SK-N-SH (cell line): ENCODE measurements at regions of chr18 and their contacts with region 1.

Region 1: GRCh38 chr18:76982841-76983587 is 149.6 kb downstream of the MBP start:
- DNase-seq: peak; percentile 90
- H3K4me3 ChIP-seq: peak overlapping the region in 1 of 2 experiments; percentile 45; a peak in 2 of 4 replicates
- H3K27ac ChIP-seq: no peak overlapping the region
- H3K4me1 ChIP-seq: peaks cover 0 to 11% of the 10 kb centered on the region in 2 experiments; a peak in 1 of 4 replicates
- H3K27me3 ChIP-seq: no peaks in the 10 kb centered on the region
- CTCF ChIP-seq: peak; percentile 93
- EP300 ChIP-seq: no peak
- RAD21 ChIP-seq: peak; percentile 76

Region 2: GRCh38 chr18:76803814-76804213 is 179.2 kb before region 1 on chr18:
- CTCF ChIA-PET with region 1: interaction called, 50 read pairs
- POLR2A ChIA-PET with region 1: no interaction called
- DNase-seq: peak; percentile 77
- H3K4me3 ChIP-seq: peak overlapping the region in 1 of 2 experiments; percentile 38; a peak in 1 of 4 replicates
- H3K27ac ChIP-seq: no peak overlapping the region
- H3K4me1 ChIP-seq: peaks cover 0 to 7% of the 10 kb centered on the region in 2 experiments; a peak in 2 of 4 replicates
- H3K27me3 ChIP-seq: no peaks in the 10 kb centered on the region
- CTCF ChIP-seq: peak; percentile 85
- EP300 ChIP-seq: no peak
- RAD21 ChIP-seq: peak; percentile 64

Region 3: GRCh38 chr18:76937597-76937996 is 45.4 kb before region 1 on chr18:
- CTCF ChIA-PET with region 1: interaction called, 14 read pairs
- POLR2A ChIA-PET with region 1: no interaction called
- DNase-seq: no peak
- H3K4me3 ChIP-seq: no peak overlapping the region
- H3K27ac ChIP-seq: no peak overlapping the region
- H3K4me1 ChIP-seq: no peaks in the 10 kb centered on the region
- H3K27me3 ChIP-seq: no peaks in the 10 kb centered on the region
- CTCF ChIP-seq: peak; percentile 39
- EP300 ChIP-seq: no peak
- RAD21 ChIP-seq: no peak

Region 4: GRCh38 chr18:76953583-76954233 is 29.3 kb before region 1 on chr18:
- CTCF ChIA-PET with region 1: interaction called, 17 read pairs
- POLR2A ChIA-PET with region 1: no interaction called
- DNase-seq: peak; percentile 45
- H3K4me3 ChIP-seq: no peak overlapping the region
- H3K27ac ChIP-seq: no peak overlapping the region
- H3K4me1 ChIP-seq: peaks cover 0 to 18% of the 10 kb centered on the region in 2 experiments; a peak in 2 of 4 replicates
- H3K27me3 ChIP-seq: no peaks in the 10 kb centered on the region
- CTCF ChIP-seq: no peak
- EP300 ChIP-seq: no peak
- RAD21 ChIP-seq: no peak

Region 5: GRCh38 chr18:76970770-76971559 is 12.0 kb before region 1 on chr18:
- CTCF ChIA-PET with region 1: interaction called, 35 read pairs
- POLR2A ChIA-PET with region 1: no interaction called
- DNase-seq: no peak
- H3K4me3 ChIP-seq: no peak overlapping the region
- H3K27ac ChIP-seq: no peak overlapping the region
- H3K4me1 ChIP-seq: peaks cover 0 to 9% of the 10 kb centered on the region in 2 experiments; a peak in 1 of 4 replicates
- H3K27me3 ChIP-seq: no peaks in the 10 kb centered on the region
- CTCF ChIP-seq: no peak
- EP300 ChIP-seq: no peak
- RAD21 ChIP-seq: no peak